ENCODE measurements at regions of chr9 and their contacts with region 1.

Region 1: GRCh38 chr9:693201-694091 is 148.1 kb upstream of the DMRT1 start:
- DNase-seq: no peak
- ATAC-seq: peak; percentile 68

Region 2: GRCh38 chr9:224582-225520 is 468.6 kb before region 1 on chr9:
- intact Hi-C with region 1: no loop called
- DNase-seq: no peak
- ATAC-seq: no peak

Region 3: GRCh38 chr9:655875-656274 is 37.6 kb before region 1 on chr9:
- intact Hi-C with region 1: loop called (anchors 5 kb)
- DNase-seq: peak; percentile 92
- ATAC-seq: peak; percentile 79

Region 4: GRCh38 chr9:715743-716400 is 22.4 kb after region 1 on chr9:
- intact Hi-C with region 1: loop called (anchors 2 kb)
- DNase-seq: no peak
- ATAC-seq: peak; percentile 77

Region 5: DNA sequence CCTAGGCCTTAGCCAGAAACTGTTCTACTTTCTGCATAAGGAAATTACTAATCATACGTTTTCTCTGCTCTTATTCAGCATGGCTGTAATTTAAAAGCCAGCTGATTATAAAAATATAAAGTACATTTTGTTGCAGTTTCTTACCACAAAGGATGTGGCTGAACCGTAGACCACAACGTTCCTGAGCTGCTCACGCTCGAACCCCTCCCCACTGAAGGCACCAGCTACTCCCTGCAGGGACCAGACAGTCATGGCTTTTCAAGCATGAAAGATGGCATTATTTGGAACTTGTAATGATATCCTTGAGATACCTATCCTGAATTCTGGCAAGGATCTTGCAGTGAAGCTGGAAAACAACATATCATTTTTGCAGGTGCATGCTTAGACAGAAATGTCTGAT is 56.3 kb after region 1 on chr9:
- intact Hi-C with region 1: loop called (anchors 10 kb)
- DNase-seq: no peak
- ATAC-seq: no peak

Region 6: DNA sequence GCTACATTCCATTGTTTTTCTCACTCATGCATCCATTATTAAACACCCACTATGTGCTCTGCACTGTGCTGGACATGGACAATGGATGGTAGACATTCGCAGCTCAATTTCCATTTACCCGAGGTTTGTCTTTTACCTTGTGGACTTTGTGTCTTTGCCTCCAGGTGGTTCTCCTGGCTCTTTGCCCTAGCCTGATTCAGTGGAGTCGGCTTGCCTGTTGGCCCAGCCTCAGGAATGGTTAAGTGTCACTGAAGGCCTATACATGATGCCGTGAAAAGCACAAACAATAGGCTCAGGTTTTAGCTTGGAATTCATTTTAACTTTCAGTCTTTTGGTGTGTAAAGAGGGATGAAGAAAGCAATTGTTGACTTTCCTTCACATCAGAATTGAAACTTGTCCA is 266.5 kb after region 1 on chr9:
- intact Hi-C with region 1: no loop called
- DNase-seq: no peak
- ATAC-seq: no peak

Measured in Right ventricle myocardium inferior (tissue), 1 donor.